T-cell (primary cell): ENCODE measurements at regions of chr5 and their contacts with region 1.

Region 1: GRCh38 chr5:53089345-53089991 is 20.1 kb downstream of the MOCS2 start:
- DNase-seq: peak in 1 of 35 experiments; percentile 34
- ATAC-seq: peak; percentile 35 to 87 (median 38)
- H3K4me3 ChIP-seq: no peak overlapping the region
- H3K4me3 Mint-ChIP-seq: peak overlapping the region in 2 of 3 donors; percentile 32 to 62
- H3K27ac ChIP-seq: no peak overlapping the region
- H3K27ac Mint-ChIP-seq: peak overlapping the region in 1 of 2 donors; percentile 64
- H3K4me1 ChIP-seq: peaks cover 0 to 12% of the 10 kb centered on the region in 2 experiments
- H3K4me1 Mint-ChIP-seq: peaks cover 18 to 22% (median 21%) of the 10 kb centered on the region in 3 donors
- H3K27me3 ChIP-seq: no peaks in the 10 kb centered on the region
- H3K27me3 Mint-ChIP-seq: no peaks in the 10 kb centered on the region

Region 2: DNA sequence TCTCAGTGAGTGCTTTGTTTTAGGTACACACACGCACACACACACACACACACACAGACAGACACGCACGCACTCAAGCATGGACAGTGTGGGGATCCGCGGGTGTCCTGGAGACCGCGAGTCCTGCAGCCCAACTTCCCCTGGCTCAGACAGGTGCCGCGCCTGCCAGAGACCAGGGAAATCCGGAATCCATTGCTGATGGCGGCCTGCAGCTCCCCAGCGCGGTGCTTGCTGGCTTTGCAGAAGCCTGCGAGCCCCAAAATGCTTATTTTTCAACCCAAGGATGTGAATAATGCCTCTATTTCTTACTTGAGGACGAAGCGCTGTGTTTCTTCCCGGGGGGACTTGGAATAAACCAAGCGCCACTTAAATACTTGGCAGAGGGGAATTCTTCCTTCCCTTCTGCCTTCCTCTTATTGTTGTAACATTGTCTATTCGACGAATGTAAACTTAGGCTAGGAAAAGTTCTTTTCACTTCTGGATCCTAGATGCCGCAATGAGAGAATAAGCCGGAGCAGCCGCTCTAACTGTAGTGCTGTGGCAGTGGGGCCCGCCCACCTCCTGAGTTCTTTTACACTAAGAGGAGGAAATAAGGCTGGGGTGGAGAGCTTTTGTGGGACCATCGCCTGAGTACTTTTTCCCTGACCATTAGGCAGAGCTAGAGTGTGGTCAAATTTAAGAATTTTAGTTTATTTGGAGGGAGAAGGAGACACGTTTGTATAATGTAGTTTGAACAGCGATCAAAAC is 99.5 kb before region 1 on chr5:
- CTCF ChIA-PET with region 1: interaction called, 5 to 10 read pairs
- POLR2A ChIA-PET with region 1: interaction called in 1 of 2 experiments, 3 read pairs
- DNase-seq: peak in 22 of 35 experiments; percentile 1 to 39 (median 13)
- ATAC-seq: peak; percentile 38 to 77 (median 46)
- H3K4me3 ChIP-seq: peak overlapping the region; percentile 77 to 84
- H3K4me3 Mint-ChIP-seq: peak overlapping the region; percentile 68 to 78 (median 75)
- H3K27ac ChIP-seq: no peak overlapping the region
- H3K27ac Mint-ChIP-seq: no peak overlapping the region
- H3K4me1 ChIP-seq: peaks cover 3 to 16% of the 10 kb centered on the region in 2 experiments
- H3K4me1 Mint-ChIP-seq: peaks cover 8 to 22% (median 22%) of the 10 kb centered on the region in 3 donors
- H3K27me3 ChIP-seq: peaks cover 0 to 15% of the 10 kb centered on the region in 2 experiments
- H3K27me3 Mint-ChIP-seq: peaks cover 17 to 25% of the 10 kb centered on the region in 2 donors